ENCODE measurements at regions of chr1 and their contacts with region 1.

Region 1: DNA sequence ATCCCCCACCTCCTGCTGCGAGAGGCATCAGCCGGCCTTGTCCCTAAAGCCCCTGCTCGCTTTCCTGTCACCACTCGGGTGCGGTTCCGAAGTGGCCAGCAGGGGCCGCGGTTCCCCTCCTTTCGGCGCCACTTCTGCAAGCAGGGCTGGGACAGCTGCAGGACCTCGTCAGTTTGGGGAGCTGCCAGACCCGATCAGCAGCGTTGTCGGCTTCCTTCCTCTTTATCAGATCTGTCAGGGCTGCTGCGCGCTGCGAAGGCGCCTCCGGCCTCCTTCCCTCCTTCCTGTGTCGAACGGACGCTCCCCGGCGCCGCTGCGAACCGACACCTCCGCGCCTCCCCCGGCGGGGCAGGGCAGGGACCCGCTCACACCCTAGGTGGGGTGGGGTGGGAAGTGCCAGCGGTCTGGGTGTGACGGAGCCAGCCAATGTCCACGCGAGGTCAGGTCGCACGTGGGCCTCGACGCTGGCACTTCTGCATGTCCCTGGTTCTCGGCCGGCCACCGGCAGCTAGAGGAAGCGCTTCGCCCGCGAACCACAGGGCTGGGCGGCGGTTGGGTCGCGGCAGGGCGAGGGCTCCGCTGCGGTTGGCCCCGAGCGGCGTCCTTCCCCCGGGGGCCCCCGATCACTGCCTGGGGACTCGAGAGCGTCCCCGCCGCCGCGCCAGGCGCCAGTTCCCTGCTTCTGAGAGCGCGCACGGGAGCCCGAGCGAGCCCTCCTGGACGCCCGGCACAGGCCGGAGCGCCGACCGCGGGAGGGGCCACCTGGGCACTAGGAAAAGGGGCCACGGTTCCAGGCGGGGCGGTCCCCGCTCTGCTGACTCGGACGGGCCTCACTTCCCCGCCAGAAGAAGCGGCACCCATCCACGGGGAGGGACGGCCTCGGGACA is 81.8 kb downstream of the RUNX3 start:
- DNase-seq: peak; percentile 58
- ATAC-seq: peak; percentile 91
- H3K4me3 ChIP-seq: peak overlapping the region; percentile 33 to 53
- H3K27ac ChIP-seq: peak overlapping the region; percentile 13; the same call in 1 of the 2 replicates
- H3K4me1 ChIP-seq: peaks cover 0 to 17% of the 10 kb centered on the region in 2 experiments; a peak in 1 of 4 replicates
- H3K27me3 ChIP-seq: no peaks in the 10 kb centered on the region
- CTCF ChIP-seq: peak; percentile 78 to 94 (median 85)
- POLR2A ChIP-seq: no peak
- RAD21 ChIP-seq: peak; percentile 90

Region 2: GRCh38 chr1:23916209-23917131 is 931.8 kb before region 1 on chr1:
- CTCF ChIA-PET with region 1: no interaction called
- POLR2A ChIA-PET with region 1: no interaction called
- RAD21 ChIA-PET with region 1: no interaction called
- intact Hi-C with region 1: no loop called
- DNase-seq: peak; percentile 81
- ATAC-seq: peak; percentile 97
- H3K4me3 ChIP-seq: no peak overlapping the region
- H3K27ac ChIP-seq: no peak overlapping the region
- H3K4me1 ChIP-seq: peaks cover 12 to 38% of the 10 kb centered on the region in 2 experiments
- H3K27me3 ChIP-seq: no peaks in the 10 kb centered on the region
- CTCF ChIP-seq: peak; percentile 80 to 82 (median 82)
- POLR2A ChIP-seq: no peak
- RAD21 ChIP-seq: peak; percentile 94

Region 3: DNA sequence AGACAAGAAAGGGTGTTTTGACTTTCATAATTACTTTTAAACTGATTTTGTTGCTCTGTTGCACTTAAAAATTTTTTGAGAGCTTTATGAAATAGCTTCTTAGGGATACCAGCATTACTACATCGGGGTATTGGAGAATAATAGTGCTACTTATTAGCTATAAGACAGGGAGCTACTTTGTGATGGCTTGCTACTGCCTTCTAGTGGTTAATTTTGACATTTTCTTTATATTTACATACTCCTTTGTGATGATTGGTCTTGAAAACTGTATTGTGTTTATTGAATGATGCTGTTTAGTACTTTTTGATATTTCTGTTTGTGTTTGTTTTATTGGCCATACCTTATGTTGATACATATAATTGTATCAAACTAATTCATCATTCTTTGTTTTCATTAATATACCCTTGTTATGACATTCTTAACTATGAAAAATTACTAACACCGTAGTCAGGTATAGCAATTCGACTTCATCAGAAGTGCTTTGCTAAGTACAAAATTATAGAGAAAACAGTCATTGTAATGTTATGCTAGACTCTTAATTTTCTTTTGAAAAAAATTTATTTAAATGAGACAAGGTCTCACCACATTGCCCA is 17.5 kb before region 1 on chr1:
- CTCF ChIA-PET with region 1: interaction called, 10 read pairs
- POLR2A ChIA-PET with region 1: no interaction called
- RAD21 ChIA-PET with region 1: no interaction called
- intact Hi-C with region 1: no loop called
- DNase-seq: peak; percentile 68
- ATAC-seq: peak; percentile 84
- H3K4me3 ChIP-seq: no peak overlapping the region
- H3K27ac ChIP-seq: no peak overlapping the region
- H3K4me1 ChIP-seq: peaks cover 0 to 14% of the 10 kb centered on the region in 2 experiments; a peak in 2 of 4 replicates
- H3K27me3 ChIP-seq: no peaks in the 10 kb centered on the region
- CTCF ChIP-seq: peak; percentile 59 to 92 (median 82); a peak in 5 of 6 replicates
- POLR2A ChIP-seq: no peak
- RAD21 ChIP-seq: peak; percentile 92

Region 4: DNA sequence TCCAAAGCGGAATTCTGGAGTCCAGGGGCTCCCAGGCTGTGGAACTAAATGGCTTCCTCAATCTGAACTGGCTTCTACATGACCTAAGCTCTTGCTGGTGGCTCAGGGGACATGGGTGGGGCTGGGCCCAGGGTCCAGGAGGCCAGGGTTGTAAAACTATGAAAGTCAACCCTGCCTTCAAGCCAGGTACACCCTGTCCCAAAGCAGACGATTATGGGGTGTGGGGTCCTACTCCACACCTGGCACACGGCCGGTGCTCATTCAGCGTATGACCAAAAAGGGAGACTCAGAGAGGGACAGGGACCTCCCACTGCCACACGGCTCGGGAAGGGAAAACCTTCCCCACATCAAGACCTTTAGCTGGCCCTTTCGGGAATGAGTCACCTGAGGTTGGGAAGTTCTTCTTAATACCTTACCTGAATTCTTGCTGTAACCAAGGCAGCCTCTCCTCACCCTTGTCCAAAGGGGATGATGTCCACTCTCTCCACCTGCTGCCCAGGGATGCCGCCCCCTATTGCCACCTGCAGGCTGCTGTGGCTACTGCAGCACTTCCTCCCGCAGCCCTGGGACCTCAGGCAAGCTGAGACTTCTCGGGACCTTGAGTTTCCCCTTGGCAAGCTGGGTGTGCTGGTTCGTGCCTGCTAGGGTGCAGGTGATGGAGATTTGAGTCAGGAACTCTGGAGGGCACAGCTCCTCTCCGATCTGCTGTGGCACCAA is 49.7 kb after region 1 on chr1:
- CTCF ChIA-PET with region 1: interaction called, 12 read pairs
- POLR2A ChIA-PET with region 1: no interaction called
- RAD21 ChIA-PET with region 1: interaction called, 4 to 5 read pairs
- intact Hi-C with region 1: loop called (anchors 1 kb)
- DNase-seq: peak; percentile 10
- ATAC-seq: peak; percentile 92
- H3K4me3 ChIP-seq: no peak overlapping the region
- H3K27ac ChIP-seq: no peak overlapping the region
- H3K4me1 ChIP-seq: no peaks in the 10 kb centered on the region
- H3K27me3 ChIP-seq: no peaks in the 10 kb centered on the region
- CTCF ChIP-seq: peak; percentile 65 to 96 (median 84)
- POLR2A ChIP-seq: no peak
- RAD21 ChIP-seq: peak; percentile 73

Region 5: DNA sequence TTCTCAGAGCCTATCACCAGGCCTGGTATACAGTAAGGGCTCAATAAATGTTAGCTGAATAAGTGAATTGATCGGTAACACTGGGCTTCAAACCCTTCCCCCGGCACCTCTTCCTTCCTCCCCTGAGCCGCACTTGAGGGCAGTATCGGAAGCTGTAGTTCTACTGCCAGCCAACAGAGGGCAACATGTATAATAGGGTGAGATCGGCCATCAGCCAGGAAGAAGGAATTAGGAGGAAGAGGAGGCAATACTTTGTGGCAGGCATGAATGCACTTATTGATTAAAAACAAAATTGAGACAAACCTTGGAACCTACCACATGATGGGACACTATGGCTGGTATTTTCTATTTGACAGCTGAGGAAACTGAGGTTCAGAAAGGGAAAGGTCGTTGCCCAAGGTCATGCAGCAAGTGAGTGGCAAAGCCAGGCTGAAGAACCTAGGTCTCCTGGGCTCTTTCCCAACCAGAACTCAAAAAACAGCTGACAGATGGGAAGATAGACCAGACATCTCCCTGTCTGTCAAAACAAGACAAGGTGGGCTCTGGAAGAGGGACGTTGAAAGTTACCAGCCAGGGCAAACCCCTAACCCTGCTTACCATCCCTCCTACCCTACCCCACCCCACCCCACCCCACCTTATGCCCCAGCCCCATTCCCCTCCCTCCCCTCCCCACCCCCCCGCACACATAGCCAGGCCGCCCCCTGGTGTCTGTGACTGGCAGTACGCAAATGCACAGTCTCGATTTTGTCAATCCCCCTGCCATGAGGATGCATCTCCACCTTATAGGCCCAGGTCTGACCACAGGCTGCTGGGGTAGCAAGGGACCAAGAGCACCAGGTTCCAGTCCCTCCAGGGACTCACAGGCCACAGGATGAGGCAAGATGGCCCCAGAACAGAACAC is 189.2 kb after region 1 on chr1:
- CTCF ChIA-PET with region 1: interaction called, 3 read pairs
- POLR2A ChIA-PET with region 1: no interaction called
- RAD21 ChIA-PET with region 1: no interaction called
- intact Hi-C with region 1: loop called (anchors 5 kb)
- DNase-seq: peak; percentile 48
- ATAC-seq: peak; percentile 88
- H3K4me3 ChIP-seq: no peak overlapping the region
- H3K27ac ChIP-seq: no peak overlapping the region
- H3K4me1 ChIP-seq: peaks cover 0 to 8% of the 10 kb centered on the region in 2 experiments; a peak in 2 of 4 replicates
- H3K27me3 ChIP-seq: no peaks in the 10 kb centered on the region
- CTCF ChIP-seq: peak; percentile 77 to 89 (median 85)
- POLR2A ChIP-seq: no peak
- RAD21 ChIP-seq: peak; percentile 58

Region 6: DNA sequence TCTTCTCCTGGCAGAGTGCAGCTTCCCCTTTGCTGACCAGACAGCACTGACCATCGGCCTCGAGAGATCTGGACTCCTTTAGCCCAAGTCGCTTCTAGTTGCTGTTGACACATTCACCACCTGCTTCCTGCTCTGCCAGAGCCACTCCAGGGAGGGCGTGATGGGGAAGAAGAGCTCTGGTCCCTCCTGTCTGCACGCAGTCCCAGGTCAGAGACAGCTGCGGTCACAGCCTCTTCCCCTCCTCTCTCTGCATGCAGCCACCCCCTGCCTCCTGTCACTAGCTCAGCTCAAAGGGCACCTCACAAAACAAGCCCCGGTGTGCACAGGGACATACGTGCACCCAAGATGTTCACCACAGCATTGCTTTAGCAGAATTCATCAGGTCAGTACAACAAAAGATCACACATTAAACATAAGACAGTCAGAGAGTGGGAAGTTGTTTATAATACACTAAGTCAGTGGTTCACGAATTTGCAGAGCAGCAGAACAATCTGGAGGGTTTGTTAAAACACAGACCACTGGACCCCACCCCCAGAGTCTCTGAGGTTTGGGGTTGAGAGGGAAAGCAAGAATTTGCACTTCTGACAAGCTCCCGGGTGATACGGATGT is 251.2 kb after region 1 on chr1:
- CTCF ChIA-PET with region 1: interaction called, 3 read pairs
- POLR2A ChIA-PET with region 1: no interaction called
- RAD21 ChIA-PET with region 1: no interaction called
- intact Hi-C with region 1: loop called (anchors 1 kb)
- DNase-seq: no peak
- ATAC-seq: no peak
- H3K4me3 ChIP-seq: no peak overlapping the region
- H3K27ac ChIP-seq: no peak overlapping the region
- H3K4me1 ChIP-seq: no peaks in the 10 kb centered on the region; a peak in 1 of 4 replicates
- H3K27me3 ChIP-seq: no peaks in the 10 kb centered on the region
- CTCF ChIP-seq: no peak
- POLR2A ChIP-seq: no peak
- RAD21 ChIP-seq: no peak

Region 7: DNA sequence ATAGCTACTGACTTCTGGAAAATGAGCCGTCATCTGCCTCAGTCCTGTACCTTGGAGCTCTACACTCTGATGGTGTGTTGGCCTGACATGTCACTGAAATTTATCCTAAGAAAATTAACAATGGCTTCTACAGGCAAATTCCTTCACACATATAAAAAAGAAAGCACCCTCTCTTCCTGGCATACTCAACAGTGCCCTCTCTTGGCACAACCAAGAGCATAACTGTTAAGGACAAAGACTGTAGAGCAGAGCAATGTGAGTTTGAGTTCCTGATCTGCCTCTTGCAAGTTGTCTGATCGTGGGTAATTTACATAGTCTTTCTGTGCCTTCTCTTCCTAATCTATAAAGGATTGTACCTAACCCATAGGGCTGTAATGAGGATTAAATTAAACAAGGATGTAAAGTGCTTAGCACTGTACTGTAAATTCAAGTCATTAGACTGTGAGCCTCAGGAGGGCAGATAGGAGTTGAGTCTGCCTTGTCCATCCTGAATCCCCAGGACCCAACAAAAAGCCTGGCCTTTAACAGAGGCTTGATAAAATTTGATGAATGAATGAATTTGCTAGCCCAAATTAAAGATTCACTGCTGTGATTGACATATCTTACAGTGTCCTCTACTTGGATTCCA is 300.5 kb after region 1 on chr1:
- CTCF ChIA-PET with region 1: no interaction called
- POLR2A ChIA-PET with region 1: no interaction called
- RAD21 ChIA-PET with region 1: no interaction called
- intact Hi-C with region 1: loop called (anchors 5 kb)
- DNase-seq: no peak
- ATAC-seq: peak; percentile 89
- H3K4me3 ChIP-seq: no peak overlapping the region
- H3K27ac ChIP-seq: no peak overlapping the region
- H3K4me1 ChIP-seq: peaks cover 0 to 7% of the 10 kb centered on the region in 2 experiments; a peak in 2 of 4 replicates
- H3K27me3 ChIP-seq: no peaks in the 10 kb centered on the region
- CTCF ChIP-seq: peak; percentile 58 to 71 (median 62); a peak in 5 of 6 replicates
- POLR2A ChIP-seq: no peak
- RAD21 ChIP-seq: peak; percentile 55

Region 8: GRCh38 chr1:25204797-25205480 is 356.7 kb after region 1 on chr1:
- CTCF ChIA-PET with region 1: interaction called, 15 read pairs
- POLR2A ChIA-PET with region 1: no interaction called
- RAD21 ChIA-PET with region 1: no interaction called
- intact Hi-C with region 1: loop called (anchors 1 kb)
- DNase-seq: peak; percentile 38
- ATAC-seq: peak; percentile 73; the same call in 1 of the 2 replicates
- H3K4me3 ChIP-seq: no peak overlapping the region
- H3K27ac ChIP-seq: no peak overlapping the region
- H3K4me1 ChIP-seq: no peaks in the 10 kb centered on the region
- H3K27me3 ChIP-seq: no peaks in the 10 kb centered on the region
- CTCF ChIP-seq: peak; percentile 60 to 80 (median 77)
- POLR2A ChIP-seq: no peak
- RAD21 ChIP-seq: peak; percentile 83

Measured in HCT116 (cell line).